ENCODE measurements at regions of chr9 and their contacts with region 1.

Region 1: GRCh38 chr9:134443168-134444037 is 117.1 kb downstream of the RXRA start:
- DNase-seq: peak; percentile 86 to 97
- H3K4me3 ChIP-seq: no peak overlapping the region
- CTCF ChIP-seq: peak in 2 of 3 donors; percentile 58 to 97
- POLR2A ChIP-seq: no peak

Region 2: DNA sequence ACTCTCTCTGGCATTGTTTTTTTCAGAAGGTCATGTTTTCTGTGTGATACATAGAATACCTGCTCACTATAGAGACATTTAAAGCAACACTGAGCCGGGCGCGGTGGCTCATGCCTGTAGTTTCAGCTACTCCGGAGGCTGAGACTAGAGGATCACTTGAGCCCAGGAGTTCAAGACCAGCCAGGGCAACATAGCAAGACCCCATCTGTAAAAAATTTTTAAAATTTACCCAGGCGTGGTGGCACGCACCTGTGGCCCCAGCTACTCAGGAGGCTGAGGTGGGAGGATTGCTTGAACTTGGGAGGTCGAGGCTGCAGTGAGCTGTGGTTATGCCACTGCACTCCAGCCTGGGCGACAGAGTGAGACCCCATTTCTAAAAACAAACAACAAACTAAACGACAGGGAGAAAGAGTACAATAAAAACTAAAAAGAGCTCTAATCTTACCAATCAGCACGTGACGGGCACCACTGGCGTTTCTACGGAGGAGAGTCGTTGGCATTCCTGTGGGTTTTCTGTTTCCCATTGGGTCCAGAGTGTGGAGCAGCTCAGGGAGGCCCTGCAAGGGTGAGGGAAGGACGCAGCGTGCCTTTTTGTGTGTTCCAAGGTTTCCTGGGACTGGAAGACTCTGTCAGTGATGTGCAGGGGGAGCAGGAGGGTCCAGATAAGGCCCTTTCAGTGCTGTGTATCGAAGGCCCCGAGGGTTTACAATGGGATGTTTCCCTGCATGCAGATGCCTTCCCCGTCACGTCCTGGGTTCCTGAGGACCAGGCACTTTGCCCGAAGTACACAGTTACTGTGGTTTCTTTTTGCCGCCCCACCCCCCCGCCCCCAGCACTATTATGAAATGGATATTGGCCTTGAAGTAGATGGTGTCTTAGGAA is 271.8 kb before region 1 on chr9:
- intact Hi-C with region 1: loop called (anchors 2 kb)
- DNase-seq: peak in 1 of 2 donors; percentile 88
- H3K4me3 ChIP-seq: no peak overlapping the region
- CTCF ChIP-seq: no peak
- POLR2A ChIP-seq: no peak